HCT116 (cell line): ENCODE measurements at regions of chr14 and their contacts with region 1.

Region 1: GRCh38 chr14:60184146-60184904 is 19.1 kb upstream of the DHRS7 start:
- DNase-seq: peak; percentile 61
- ATAC-seq: peak; percentile 64
- H3K4me3 ChIP-seq: peak overlapping the region; percentile 28 to 36
- H3K27ac ChIP-seq: no peak overlapping the region
- H3K4me1 ChIP-seq: peaks cover 0 to 12% of the 10 kb centered on the region in 2 experiments; a peak in 2 of 4 replicates
- H3K27me3 ChIP-seq: no peaks in the 10 kb centered on the region
- CTCF ChIP-seq: peak; percentile 46 to 84 (median 83); a peak in 5 of 6 replicates
- POLR2A ChIP-seq: no peak
- RAD21 ChIP-seq: peak; percentile 92

Region 2: DNA sequence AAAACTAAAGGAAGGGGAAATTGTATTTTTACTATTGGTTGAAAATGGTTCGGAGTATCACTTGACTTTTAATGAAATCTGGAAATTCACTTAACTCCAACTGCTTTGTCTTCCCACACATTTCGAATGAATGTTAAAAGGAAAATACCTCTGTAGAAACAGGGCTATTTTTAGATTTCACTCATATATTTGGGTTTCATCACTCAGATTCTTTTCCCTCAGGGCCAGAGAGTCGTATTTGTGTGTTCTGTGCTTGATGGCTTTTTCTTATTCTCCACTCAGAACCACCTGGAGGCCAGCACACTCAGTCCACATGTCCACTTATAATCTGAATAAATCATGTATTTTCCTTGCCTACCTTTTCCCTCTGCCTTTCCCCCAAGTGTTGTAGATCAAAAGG is 955.9 kb before region 1 on chr14:
- CTCF ChIA-PET with region 1: no interaction called
- POLR2A ChIA-PET with region 1: no interaction called
- RAD21 ChIA-PET with region 1: no interaction called
- intact Hi-C with region 1: no loop called
- DNase-seq: no peak
- ATAC-seq: no peak
- H3K4me3 ChIP-seq: no peak overlapping the region
- H3K27ac ChIP-seq: no peak overlapping the region
- H3K4me1 ChIP-seq: no peaks in the 10 kb centered on the region
- H3K27me3 ChIP-seq: no peaks in the 10 kb centered on the region
- CTCF ChIP-seq: no peak
- POLR2A ChIP-seq: no peak
- RAD21 ChIP-seq: no peak

Region 3: GRCh38 chr14:59483900-59484638 is 700.3 kb before region 1 on chr14 and contains the starts of genes JKAMP and L3HYPDH:
- CTCF ChIA-PET with region 1: interaction called, 11 read pairs
- POLR2A ChIA-PET with region 1: no interaction called
- RAD21 ChIA-PET with region 1: no interaction called
- intact Hi-C with region 1: no loop called
- DNase-seq: peak; percentile 90
- ATAC-seq: peak; percentile 88
- H3K4me3 ChIP-seq: peak within 1 kb of the TSS; percentile 81 to 93
- H3K27ac ChIP-seq: peak within 1 kb of the TSS; percentile 87
- H3K4me1 ChIP-seq: peaks cover 13 to 33% of the 10 kb centered on the region in 2 experiments
- H3K27me3 ChIP-seq: no peaks in the 10 kb centered on the region
- CTCF ChIP-seq: peak; percentile 35 to 54 (median 47); a peak in 5 of 6 replicates
- POLR2A ChIP-seq: peak; percentile 43
- RAD21 ChIP-seq: no peak
- total RNA-seq, gene JKAMP: 46.5 TPM
- total RNA-seq, gene L3HYPDH: 19.5 TPM

Region 4: DNA sequence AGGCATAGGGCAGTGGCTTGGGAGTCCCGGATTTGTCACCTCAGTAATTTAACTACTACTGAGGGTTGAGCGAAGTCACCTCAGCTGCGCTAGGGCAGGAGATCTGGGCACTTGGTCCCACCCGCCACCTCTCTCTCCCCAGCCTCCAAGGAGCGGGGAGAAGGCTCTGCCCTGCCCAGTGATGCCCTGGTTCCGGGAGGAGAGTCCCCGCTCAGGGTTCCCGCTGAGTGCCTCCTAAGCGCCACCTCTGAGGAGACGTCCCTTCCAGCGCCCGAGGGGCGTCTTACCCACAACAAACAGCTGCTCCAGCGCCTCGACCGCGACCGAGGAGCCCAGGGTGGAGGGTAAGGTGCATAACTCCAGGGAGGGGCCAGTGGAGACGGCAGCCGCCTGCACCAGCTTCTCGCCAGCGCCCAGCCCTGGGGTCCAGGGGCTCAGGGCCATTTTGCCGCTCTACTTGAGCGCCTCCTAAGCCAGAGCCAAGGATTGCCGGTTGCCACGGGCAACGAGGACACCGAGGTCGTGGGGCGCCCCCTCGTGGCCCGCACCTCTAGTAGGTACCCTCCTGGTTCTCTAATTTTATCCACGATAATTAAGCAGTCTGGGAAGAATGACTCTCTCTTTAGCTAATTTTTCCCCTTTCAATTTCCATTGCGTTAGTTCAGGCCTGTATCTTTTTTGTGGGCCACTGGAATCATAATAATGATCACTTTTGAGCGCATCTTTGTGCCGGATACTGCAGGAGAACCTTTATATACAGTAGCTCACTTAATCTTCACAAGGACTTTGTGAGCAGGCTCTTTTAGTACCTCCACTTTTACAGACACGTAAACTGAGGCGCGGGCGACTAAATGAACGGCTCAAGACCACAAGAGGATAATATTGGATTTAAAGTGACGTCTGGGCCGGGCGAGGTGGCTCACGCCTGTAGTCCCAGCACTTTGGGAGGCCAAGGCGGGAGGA is 607.7 kb before region 1 on chr14 and contains the start of gene CCDC175:
- CTCF ChIA-PET with region 1: interaction called, 3 read pairs
- POLR2A ChIA-PET with region 1: no interaction called
- RAD21 ChIA-PET with region 1: no interaction called
- intact Hi-C with region 1: loop called (anchors 5 kb)
- DNase-seq: peak; percentile 60
- ATAC-seq: peak; percentile 99
- H3K4me3 ChIP-seq: peak within 1 kb of the TSS; percentile 43 to 52
- H3K27ac ChIP-seq: no peak within 1 kb of the TSS; the same call in 1 of the 2 replicates
- H3K4me1 ChIP-seq: peaks cover 0 to 7% of the 10 kb centered on the region in 2 experiments; a peak in 1 of 4 replicates
- H3K27me3 ChIP-seq: no peaks in the 10 kb centered on the region
- CTCF ChIP-seq: peak; percentile 84 to 87 (median 86)
- POLR2A ChIP-seq: no peak
- RAD21 ChIP-seq: peak; percentile 81
- total RNA-seq, gene CCDC175: not detected

Region 5: GRCh38 chr14:59897761-59898383 is 286.5 kb before region 1 on chr14:
- CTCF ChIA-PET with region 1: interaction called, 16 read pairs
- POLR2A ChIA-PET with region 1: no interaction called
- RAD21 ChIA-PET with region 1: no interaction called
- intact Hi-C with region 1: no loop called
- DNase-seq: peak; percentile 10
- ATAC-seq: peak; percentile 81
- H3K4me3 ChIP-seq: no peak overlapping the region
- H3K27ac ChIP-seq: no peak overlapping the region
- H3K4me1 ChIP-seq: no peaks in the 10 kb centered on the region
- H3K27me3 ChIP-seq: no peaks in the 10 kb centered on the region
- CTCF ChIP-seq: peak; percentile 44 to 57 (median 54); a peak in 5 of 6 replicates
- POLR2A ChIP-seq: no peak
- RAD21 ChIP-seq: peak; percentile 68

Region 6: DNA sequence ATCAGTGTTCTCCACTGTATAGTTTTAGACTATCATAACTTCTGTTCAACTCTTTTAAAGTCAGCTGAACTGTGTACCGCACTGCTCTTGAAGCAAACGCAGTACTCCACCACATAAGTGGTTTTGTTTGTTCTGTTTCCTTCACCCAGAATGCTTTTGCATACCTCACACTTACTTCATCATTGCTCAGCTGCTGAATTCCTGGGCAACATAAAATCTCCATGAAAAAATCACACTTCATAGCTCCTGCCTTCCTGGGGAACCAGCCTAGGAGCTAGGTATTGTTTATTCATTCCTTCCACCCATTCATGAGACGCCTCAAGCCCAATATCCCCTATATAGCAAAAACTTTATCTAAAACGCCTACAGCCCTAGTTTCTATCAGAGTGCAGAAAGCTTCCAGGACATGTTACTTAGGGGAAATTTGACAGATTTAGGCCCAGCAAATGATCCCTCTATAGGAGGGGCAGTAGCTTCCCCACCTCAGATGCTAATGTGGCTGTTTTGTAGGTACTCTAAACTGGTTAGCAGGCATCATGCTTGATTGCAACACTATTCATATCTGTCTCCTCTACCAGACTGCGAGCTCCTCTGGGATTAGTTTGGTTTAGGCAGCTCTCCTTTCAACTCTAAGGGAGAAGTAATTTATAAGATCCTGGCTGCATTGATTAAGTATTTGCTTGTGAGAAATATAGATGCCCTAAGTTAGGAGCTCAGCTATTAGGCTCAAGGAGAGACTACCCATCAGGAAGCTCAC is 219.9 kb before region 1 on chr14:
- CTCF ChIA-PET with region 1: interaction called, 38 read pairs
- POLR2A ChIA-PET with region 1: no interaction called
- RAD21 ChIA-PET with region 1: no interaction called
- intact Hi-C with region 1: loop called (anchors 1 kb)
- DNase-seq: no peak
- ATAC-seq: peak; percentile 49
- H3K4me3 ChIP-seq: no peak overlapping the region
- H3K27ac ChIP-seq: no peak overlapping the region
- H3K4me1 ChIP-seq: peaks cover 0 to 4% of the 10 kb centered on the region in 2 experiments; a peak in 1 of 4 replicates
- H3K27me3 ChIP-seq: no peaks in the 10 kb centered on the region
- CTCF ChIP-seq: no peak
- POLR2A ChIP-seq: no peak
- RAD21 ChIP-seq: no peak

Region 7: DNA sequence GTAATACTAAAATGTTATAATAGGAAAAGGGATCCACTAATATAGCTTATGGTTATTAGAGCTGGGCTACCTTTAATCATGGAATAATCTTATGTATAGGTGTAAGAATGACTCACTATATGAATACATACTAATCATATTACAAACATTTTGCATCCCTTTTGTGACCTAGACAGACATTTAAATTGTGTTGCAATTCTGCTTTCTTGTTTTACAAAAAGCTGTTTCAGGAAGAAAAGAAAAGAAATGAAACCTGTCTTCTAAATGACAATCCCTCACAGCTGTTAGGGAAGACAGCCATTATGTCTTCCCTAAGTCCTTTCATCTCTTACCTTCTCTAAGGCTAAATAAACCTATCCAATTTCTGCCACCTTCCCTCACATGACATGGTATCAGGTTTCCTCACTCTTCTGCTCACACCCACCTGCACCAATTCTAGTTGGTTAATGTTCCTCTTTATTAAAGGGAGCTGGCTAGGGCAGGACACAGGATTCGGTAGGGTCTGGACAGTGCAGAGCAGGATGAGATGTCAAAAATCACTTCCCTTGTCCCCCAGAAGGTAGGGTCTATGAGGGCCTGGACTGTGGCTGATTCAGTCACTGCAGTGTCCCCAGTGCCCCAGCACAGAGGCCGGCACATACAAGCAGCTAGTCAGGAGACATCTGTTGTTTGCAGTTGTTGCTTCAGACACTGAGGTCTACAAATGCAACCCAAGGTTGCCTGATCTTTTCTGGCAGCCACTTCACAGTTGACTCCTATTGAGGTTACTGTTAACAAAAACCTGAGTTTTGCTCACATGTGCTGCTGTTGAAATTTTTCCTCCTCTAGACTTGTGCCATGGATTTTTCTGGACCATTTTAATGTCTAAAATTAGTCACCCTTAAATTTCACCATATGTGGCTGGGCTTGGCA is 22.9 kb before region 1 on chr14:
- CTCF ChIA-PET with region 1: no interaction called
- POLR2A ChIA-PET with region 1: no interaction called
- RAD21 ChIA-PET with region 1: no interaction called
- intact Hi-C with region 1: no loop called
- DNase-seq: no peak
- ATAC-seq: no peak
- H3K4me3 ChIP-seq: no peak overlapping the region
- H3K27ac ChIP-seq: no peak overlapping the region
- H3K4me1 ChIP-seq: peaks cover 16 to 27% of the 10 kb centered on the region in 2 experiments
- H3K27me3 ChIP-seq: no peaks in the 10 kb centered on the region
- CTCF ChIP-seq: no peak
- POLR2A ChIP-seq: no peak
- RAD21 ChIP-seq: no peak

Region 8: DNA sequence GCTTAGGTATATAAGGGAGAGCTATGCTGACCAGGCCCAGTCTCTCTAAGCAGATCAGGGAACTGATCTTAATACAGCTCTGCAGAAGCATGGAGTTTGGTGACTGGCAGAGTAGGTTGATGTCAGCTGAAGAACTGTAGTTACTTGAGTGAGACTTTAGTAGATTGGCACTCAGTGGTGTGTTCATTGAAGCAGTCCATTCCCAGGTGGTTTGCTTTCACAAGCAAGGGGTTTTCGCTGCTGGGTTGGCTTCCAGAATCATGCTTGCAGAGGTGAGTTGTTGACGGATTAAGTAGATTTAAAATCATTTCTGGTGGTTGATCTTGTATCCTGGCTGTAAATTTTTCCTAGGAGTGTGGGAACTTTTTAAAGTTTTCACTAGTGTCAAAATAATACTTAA is 12.6 kb before region 1 on chr14:
- CTCF ChIA-PET with region 1: no interaction called
- POLR2A ChIA-PET with region 1: no interaction called
- RAD21 ChIA-PET with region 1: no interaction called
- intact Hi-C with region 1: no loop called
- DNase-seq: no peak
- ATAC-seq: no peak
- H3K4me3 ChIP-seq: no peak overlapping the region
- H3K27ac ChIP-seq: no peak overlapping the region
- H3K4me1 ChIP-seq: peaks cover 0 to 9% of the 10 kb centered on the region in 2 experiments; a peak in 1 of 4 replicates
- H3K27me3 ChIP-seq: no peaks in the 10 kb centered on the region
- CTCF ChIP-seq: no peak
- POLR2A ChIP-seq: no peak
- RAD21 ChIP-seq: no peak

Region 9: GRCh38 chr14:60485598-60486251 is 301.4 kb after region 1 on chr14 and contains the start of gene C14orf39:
- CTCF ChIA-PET with region 1: no interaction called
- POLR2A ChIA-PET with region 1: no interaction called
- RAD21 ChIA-PET with region 1: interaction called in 1 of 2 experiments, 3 read pairs
- intact Hi-C with region 1: loop called (anchors 10 kb)
- DNase-seq: no peak
- ATAC-seq: no peak
- H3K4me3 ChIP-seq: no peak within 1 kb of the TSS
- H3K27ac ChIP-seq: no peak within 1 kb of the TSS
- H3K4me1 ChIP-seq: no peaks in the 10 kb centered on the region; a peak in 1 of 4 replicates
- H3K27me3 ChIP-seq: no peaks in the 10 kb centered on the region
- CTCF ChIP-seq: no peak
- POLR2A ChIP-seq: no peak
- RAD21 ChIP-seq: no peak
- total RNA-seq, gene C14orf39: not detected

Region 10: GRCh38 chr14:60616461-60616959 is 432.2 kb after region 1 on chr14:
- CTCF ChIA-PET with region 1: no interaction called
- POLR2A ChIA-PET with region 1: no interaction called
- RAD21 ChIA-PET with region 1: no interaction called
- intact Hi-C with region 1: no loop called
- DNase-seq: no peak
- ATAC-seq: no peak
- H3K4me3 ChIP-seq: no peak overlapping the region
- H3K27ac ChIP-seq: no peak overlapping the region
- H3K4me1 ChIP-seq: no peaks in the 10 kb centered on the region
- H3K27me3 ChIP-seq: no peaks in the 10 kb centered on the region
- CTCF ChIP-seq: no peak
- POLR2A ChIP-seq: no peak
- RAD21 ChIP-seq: no peak

Region 11: DNA sequence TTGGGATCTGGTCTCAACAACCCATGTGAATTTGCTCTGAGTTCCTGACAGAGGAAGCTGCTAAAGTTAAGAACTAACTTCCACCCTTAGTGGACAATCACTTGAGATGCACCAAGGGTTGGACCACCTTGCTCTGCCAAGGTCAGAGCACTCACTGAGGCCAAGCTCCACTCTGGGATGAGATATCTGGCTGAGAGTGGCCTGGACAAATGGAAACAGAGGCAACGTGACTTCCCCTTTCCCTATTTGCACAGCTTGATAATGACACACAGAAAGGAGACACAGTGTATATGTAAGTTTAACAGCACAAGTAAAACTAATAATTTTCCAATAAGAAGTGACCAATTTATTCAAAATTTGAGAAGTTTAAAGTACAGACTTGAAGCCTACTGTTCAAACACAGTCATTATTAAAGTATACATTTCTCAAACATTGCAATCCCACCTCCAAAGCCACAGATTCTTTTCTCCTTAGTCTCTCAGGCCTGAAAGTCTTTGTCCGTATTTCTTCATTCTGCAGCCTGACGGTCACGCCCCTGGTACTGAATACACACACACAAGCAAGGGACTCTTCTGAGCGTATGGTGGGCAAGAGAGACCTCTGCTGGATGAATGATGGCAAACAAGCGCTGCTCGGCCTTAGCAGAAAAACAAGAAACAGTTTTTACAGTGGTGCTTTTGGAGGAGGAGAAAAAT is 1068.2 kb after region 1 on chr14:
- CTCF ChIA-PET with region 1: no interaction called
- POLR2A ChIA-PET with region 1: no interaction called
- RAD21 ChIA-PET with region 1: no interaction called
- intact Hi-C with region 1: loop called (anchors 2 kb)
- DNase-seq: peak; percentile 72
- ATAC-seq: peak; percentile 99
- H3K4me3 ChIP-seq: no peak overlapping the region
- H3K27ac ChIP-seq: no peak overlapping the region
- H3K4me1 ChIP-seq: peaks cover 0 to 5% of the 10 kb centered on the region in 2 experiments; a peak in 2 of 4 replicates
- H3K27me3 ChIP-seq: no peaks in the 10 kb centered on the region
- CTCF ChIP-seq: peak; percentile 83 to 94 (median 92); a peak in 5 of 6 replicates
- POLR2A ChIP-seq: no peak
- RAD21 ChIP-seq: peak; percentile 97